Activated B cell treated with CpG ODN at 0.5 μM for 24 hours (primary cell): ENCODE measurements at regions of chr1 and their contacts with region 1.

Region 1: DNA sequence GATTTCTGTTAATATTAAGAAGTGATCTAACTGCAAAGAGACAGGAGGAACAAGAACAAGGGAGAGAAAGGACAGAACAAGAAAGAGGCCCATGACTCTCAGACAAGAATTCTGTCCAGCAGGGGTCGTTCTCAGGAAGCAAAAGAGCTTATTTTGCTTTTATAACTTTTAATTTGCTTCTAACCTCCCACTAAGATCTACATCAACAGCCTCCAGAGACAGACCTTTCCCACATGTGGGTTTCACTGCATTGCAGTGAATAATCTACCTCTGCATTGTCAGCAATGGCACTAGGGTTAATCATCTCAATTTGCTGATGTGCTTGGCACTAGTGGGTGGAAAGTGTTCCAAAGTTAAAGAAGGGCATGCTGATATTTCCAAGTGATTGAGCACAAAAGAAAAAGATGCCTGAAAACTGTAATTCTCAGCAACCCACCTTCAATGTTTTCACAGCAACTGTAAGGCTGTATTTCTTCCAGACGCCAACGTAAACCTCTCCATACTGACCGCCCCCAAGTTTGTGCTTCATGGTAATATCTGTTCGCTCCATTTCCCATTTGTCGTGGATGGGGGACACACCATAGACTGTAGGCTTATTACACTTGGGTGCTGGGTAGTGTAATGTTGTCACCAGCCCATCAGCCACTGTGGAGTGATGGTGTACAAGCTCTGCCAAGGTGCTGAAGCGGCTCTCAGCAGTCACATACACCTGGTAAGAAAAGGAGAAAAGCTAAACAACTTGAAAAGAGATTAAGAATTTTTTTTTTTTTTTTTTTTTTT is 39.5 kb downstream of the TOR3A start:
- DNase-seq: no peak
- ATAC-seq: peak; percentile 47
- H3K4me3 Mint-ChIP-seq: no peak overlapping the region
- H3K27ac Mint-ChIP-seq: no peak overlapping the region
- H3K4me1 Mint-ChIP-seq: peaks cover 8% of the 10 kb centered on the region
- H3K27me3 Mint-ChIP-seq: no peaks in the 10 kb centered on the region
- CTCF ChIP-seq: peak; percentile 66

Region 2: GRCh38 chr1:179194068-179194537 is 72.8 kb after region 1 on chr1:
- CTCF ChIA-PET with region 1: interaction called, 4 read pairs
- POLR2A ChIA-PET with region 1: no interaction called
- intact Hi-C with region 1: loop called (anchors 2 kb)
- DNase-seq: no peak
- ATAC-seq: no peak
- H3K4me3 Mint-ChIP-seq: no peak overlapping the region
- H3K27ac Mint-ChIP-seq: no peak overlapping the region
- H3K4me1 Mint-ChIP-seq: peaks cover 11% of the 10 kb centered on the region
- H3K27me3 Mint-ChIP-seq: no peaks in the 10 kb centered on the region
- CTCF ChIP-seq: no peak

Region 3: DNA sequence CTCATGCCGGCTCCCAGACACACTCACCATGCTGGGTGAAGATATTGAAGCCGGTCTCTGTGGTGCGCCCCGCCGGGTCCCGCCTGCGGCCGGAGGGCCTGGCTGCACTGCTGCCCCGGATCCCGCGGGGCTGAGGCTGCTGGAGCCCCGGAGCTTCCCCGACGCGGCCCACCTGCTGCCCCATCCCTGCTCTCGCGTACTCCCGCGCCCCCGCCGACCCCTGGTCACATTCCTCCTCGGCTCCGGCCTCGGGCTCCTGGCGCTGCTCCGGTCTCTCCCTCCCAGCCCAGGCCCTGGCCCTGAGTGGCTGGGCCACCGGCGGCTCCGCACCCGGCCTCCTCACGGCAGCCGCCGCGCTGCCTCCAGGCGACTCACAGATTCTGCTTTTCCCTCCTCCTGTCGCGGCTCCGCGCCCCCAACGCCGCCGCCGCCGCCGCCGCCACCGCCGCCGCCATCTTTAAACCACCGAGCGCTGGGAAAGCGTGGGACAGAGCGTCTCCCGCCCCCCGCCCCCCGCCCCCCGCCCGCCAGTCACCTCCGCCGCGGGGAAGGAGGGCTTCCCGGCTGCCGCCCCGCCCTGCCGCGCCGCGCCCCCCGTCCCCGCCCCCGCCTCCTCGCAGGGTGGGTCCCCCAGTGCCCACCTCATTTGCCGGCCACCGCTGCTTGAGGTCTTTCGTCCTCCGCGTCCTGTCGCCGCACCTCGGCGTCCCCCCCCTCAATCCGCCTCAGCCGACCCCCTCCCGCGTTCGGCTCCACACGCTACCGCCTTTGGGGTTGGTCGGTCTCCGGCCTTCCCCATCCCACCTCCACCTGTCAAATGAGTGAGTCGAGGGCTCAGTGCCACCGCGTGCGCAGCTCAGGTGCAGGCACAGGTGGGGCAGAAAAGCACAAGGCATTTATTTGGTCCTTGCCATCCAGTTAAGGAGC is 108.1 kb after region 1 on chr1 and contains the start of gene ABL2:
- CTCF ChIA-PET with region 1: no interaction called
- POLR2A ChIA-PET with region 1: no interaction called
- intact Hi-C with region 1: loop called (anchors 5 kb)
- DNase-seq: peak; percentile 49
- ATAC-seq: peak; percentile 72
- H3K4me3 Mint-ChIP-seq: peak within 1 kb of the TSS; percentile 95
- H3K27ac Mint-ChIP-seq: peak within 1 kb of the TSS; percentile 78
- H3K4me1 Mint-ChIP-seq: peaks cover 23% of the 10 kb centered on the region
- H3K27me3 Mint-ChIP-seq: no peaks in the 10 kb centered on the region
- CTCF ChIP-seq: no peak
- total RNA-seq, gene ABL2: 15.2 and 15.6 TPM in 2 replicates

Region 4: GRCh38 chr1:179269071-179269470 is 147.7 kb after region 1 on chr1:
- CTCF ChIA-PET with region 1: no interaction called
- POLR2A ChIA-PET with region 1: no interaction called
- intact Hi-C with region 1: no loop called
- DNase-seq: no peak
- ATAC-seq: no peak
- H3K4me3 Mint-ChIP-seq: no peak overlapping the region
- H3K27ac Mint-ChIP-seq: no peak overlapping the region
- H3K4me1 Mint-ChIP-seq: no peaks in the 10 kb centered on the region
- H3K27me3 Mint-ChIP-seq: no peaks in the 10 kb centered on the region
- CTCF ChIP-seq: no peak